GM12878 (cell line): ENCODE measurements at regions of chr11 and their contacts with region 1.

Region 1: GRCh38 chr11:119356349-119357031 is 10.0 kb upstream of the MFRP start:
- DNase-seq: no peak
- ATAC-seq: peak; percentile 91
- H3K4me3 ChIP-seq: peak overlapping the region; percentile 49; the same call in 1 of the 2 replicates
- H3K27ac ChIP-seq: no peak overlapping the region
- H3K4me1 ChIP-seq: peaks cover 10% of the 10 kb centered on the region
- H3K27me3 ChIP-seq: peaks cover 2 to 4% of the 10 kb centered on the region in 2 experiments; a peak in 3 of 4 replicates
- CTCF ChIP-seq: peak; percentile 78 to 94 (median 90)
- EP300 ChIP-seq: no peak
- POLR2A ChIP-seq: no peak
- RAD21 ChIP-seq: peak; percentile 72

Region 2: GRCh38 chr11:119368121-119369034 is 11.9 kb after region 1 on chr11:
- CTCF ChIA-PET with region 1: interaction called, 183 read pairs
- POLR2A ChIA-PET with region 1: interaction called, 6 read pairs
- RAD21 ChIA-PET with region 1: interaction called, 47 read pairs
- SMC1A ChIA-PET with region 1: interaction called, 31 read pairs
- in situ Hi-C with region 1: no loop called
- intact Hi-C with region 1: no loop called
- DNase-seq: no peak
- ATAC-seq: no peak
- H3K4me3 ChIP-seq: no peak overlapping the region
- H3K27ac ChIP-seq: no peak overlapping the region
- H3K4me1 ChIP-seq: no peaks in the 10 kb centered on the region
- H3K27me3 ChIP-seq: peaks cover 4 to 7% of the 10 kb centered on the region in 2 experiments; a peak in 3 of 4 replicates
- CTCF ChIP-seq: no peak
- EP300 ChIP-seq: no peak
- POLR2A ChIP-seq: no peak
- RAD21 ChIP-seq: no peak

Region 3: DNA sequence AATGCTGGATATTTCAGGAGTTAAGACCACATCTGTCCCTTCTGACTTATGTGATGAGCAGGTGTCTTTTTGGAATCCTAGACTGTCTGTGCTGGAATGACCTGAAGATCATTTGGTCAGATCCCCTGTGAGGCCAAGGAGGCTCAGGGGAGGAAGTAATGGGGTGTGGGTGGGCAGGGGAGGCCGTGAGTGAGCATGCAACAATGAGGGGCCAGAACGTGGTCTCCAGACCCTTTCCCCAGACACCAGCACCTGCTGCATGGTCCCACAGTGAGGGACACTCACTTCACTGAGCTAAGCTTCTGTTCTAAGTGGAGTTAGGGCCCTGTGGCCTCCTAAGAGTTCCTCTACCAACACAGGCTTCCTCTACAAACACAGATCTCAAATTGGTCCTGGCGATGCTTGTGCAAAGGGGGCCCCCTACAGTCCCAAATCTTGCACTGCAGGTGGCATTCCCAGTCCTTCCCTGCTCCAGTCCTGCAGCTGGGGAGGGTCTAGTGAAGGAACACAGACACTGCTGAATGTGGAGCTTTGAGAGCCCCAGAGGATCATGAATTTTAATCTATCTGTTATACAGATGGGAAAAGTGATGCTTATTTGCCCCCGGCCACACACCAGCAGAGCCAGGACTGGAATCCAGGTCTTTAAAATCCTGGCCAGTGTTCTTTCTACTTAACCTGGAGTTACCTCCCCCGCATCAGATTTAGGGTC is 17.6 kb after region 1 on chr11:
- CTCF ChIA-PET with region 1: interaction called, 183 read pairs
- POLR2A ChIA-PET with region 1: interaction called, 6 read pairs
- RAD21 ChIA-PET with region 1: interaction called, 47 read pairs
- SMC1A ChIA-PET with region 1: interaction called, 31 read pairs
- in situ Hi-C with region 1: no loop called
- intact Hi-C with region 1: no loop called
- DNase-seq: no peak
- ATAC-seq: peak; percentile 51
- H3K4me3 ChIP-seq: no peak overlapping the region
- H3K27ac ChIP-seq: no peak overlapping the region
- H3K4me1 ChIP-seq: no peaks in the 10 kb centered on the region
- H3K27me3 ChIP-seq: peaks cover 0 to 3% of the 10 kb centered on the region in 2 experiments; a peak in 2 of 4 replicates
- CTCF ChIP-seq: peak; percentile 71 to 78 (median 76); a peak in 5 of 6 replicates
- EP300 ChIP-seq: no peak
- POLR2A ChIP-seq: no peak
- RAD21 ChIP-seq: peak; percentile 81

Region 4: DNA sequence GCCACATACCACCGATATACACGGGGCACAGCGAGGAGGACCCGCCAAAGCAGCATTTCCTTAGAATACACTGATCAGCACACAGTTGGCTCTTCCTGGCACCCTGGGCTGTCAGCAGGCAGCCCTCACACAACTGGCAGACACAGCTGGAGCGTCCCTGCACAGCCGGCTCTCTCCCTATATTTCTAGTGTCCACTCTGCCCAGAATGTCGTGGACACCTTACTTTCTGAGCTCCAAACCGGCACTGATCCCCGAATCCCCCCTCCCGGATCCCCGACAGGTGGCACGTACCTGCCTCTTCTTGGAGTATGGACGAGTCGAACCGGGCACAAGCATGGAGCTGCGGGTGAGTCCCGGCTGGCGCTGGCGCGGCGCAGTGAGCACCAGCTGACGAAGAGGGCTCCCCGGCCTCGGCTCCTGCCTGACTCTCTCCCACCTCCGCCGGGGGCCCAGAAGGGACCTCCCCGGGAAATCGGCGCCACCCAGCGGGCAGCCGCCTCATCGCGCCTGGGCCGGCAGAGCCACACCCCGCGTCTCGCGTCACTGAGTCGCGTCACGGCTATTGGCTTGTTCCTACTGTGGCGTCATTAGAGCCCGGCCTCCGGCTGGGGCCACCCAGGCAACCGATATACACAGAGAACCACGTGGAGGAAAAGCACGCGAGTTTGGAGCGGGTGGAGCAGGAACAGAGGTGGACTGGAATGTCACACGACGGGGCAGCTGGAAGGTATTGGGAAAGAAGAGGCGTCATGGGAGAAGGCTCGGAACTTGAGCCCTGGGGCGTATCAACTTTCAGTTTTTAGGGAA is 24.9 kb after region 1 on chr11 and contains the start of gene USP2:
- CTCF ChIA-PET with region 1: interaction called, 183 read pairs
- POLR2A ChIA-PET with region 1: interaction called, 5 read pairs
- RAD21 ChIA-PET with region 1: interaction called, 47 read pairs
- SMC1A ChIA-PET with region 1: interaction called, 7 read pairs
- in situ Hi-C with region 1: no loop called
- intact Hi-C with region 1: no loop called
- DNase-seq: peak; percentile 48
- ATAC-seq: peak; percentile 99
- H3K4me3 ChIP-seq: peak within 1 kb of the TSS; percentile 40; the same call in 1 of the 2 replicates
- H3K27ac ChIP-seq: no peak within 1 kb of the TSS
- H3K4me1 ChIP-seq: 0 out of 2 replicates have a peak, but pooled peaks cover 3% of the 10 kb centered on the region
- H3K27me3 ChIP-seq: peaks cover 0 to 8% of the 10 kb centered on the region in 2 experiments; a peak in 3 of 4 replicates
- CTCF ChIP-seq: peak; percentile 83 to 88 (median 87)
- EP300 ChIP-seq: no peak
- POLR2A ChIP-seq: no peak
- RAD21 ChIP-seq: peak; percentile 28; the same call in 1 of the 2 replicates
- polyA plus RNA-seq, gene USP2: 0.04 TPM in 1 of 2 experiments, not detected in the other

Region 5: DNA sequence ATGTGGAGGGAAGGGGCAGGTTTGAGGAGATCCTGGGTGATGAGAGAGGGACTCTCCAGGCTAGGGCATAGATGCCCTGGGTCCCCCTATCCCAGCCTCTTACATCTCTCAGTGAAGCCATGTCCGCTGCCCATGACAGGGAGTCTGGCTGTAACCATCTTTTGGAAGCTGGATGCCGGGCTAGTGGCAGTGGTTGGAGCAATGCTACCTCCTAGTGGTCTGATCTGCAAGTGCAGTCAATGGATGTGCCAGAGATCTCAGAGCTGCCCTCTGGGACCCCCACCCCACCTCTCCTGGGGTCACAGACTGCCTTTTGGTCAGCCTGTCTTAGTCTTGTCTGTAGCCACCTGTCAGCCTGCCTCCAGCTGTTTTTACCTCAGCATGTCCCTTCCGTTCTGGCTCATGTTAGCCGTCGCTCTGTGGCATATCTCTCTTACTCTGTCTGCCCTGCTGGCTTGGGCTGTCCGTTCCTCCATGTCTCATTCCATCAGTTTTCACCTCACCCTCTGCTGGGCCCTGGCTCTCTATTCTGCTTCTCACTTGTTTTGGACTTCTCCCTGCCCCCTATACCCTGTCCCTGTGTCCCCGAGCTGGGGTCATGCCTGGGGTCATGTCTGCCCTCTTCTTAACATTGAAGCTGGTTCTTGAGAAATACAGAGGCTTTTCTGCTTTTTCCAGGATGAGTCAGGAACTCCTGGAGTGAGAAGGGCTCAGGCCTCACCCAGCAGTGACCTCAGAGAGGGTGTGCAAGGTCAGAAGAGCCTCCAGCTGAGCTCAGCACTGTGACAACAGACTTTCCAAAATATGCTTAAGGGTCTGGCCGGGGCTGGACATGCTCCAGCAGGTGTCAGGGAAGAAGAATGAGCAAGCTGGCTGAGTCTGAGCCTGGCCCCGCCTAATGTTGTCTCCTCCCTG is 118.4 kb after region 1 on chr11:
- CTCF ChIA-PET with region 1: interaction called, 83 read pairs
- POLR2A ChIA-PET with region 1: no interaction called
- RAD21 ChIA-PET with region 1: interaction called, 49 read pairs
- SMC1A ChIA-PET with region 1: interaction called, 32 read pairs
- in situ Hi-C with region 1: loop called (anchors 5 kb)
- intact Hi-C with region 1: loop called (anchors 1 kb)
- DNase-seq: no peak
- ATAC-seq: peak; percentile 87
- H3K4me3 ChIP-seq: no peak overlapping the region
- H3K27ac ChIP-seq: no peak overlapping the region
- H3K4me1 ChIP-seq: no peaks in the 10 kb centered on the region
- H3K27me3 ChIP-seq: peaks cover 0 to 1% of the 10 kb centered on the region in 2 experiments; a peak in 1 of 4 replicates
- CTCF ChIP-seq: peak; percentile 92 to 95 (median 93); a peak in 5 of 6 replicates
- EP300 ChIP-seq: no peak
- POLR2A ChIP-seq: no peak
- RAD21 ChIP-seq: peak; percentile 81

Region 6: DNA sequence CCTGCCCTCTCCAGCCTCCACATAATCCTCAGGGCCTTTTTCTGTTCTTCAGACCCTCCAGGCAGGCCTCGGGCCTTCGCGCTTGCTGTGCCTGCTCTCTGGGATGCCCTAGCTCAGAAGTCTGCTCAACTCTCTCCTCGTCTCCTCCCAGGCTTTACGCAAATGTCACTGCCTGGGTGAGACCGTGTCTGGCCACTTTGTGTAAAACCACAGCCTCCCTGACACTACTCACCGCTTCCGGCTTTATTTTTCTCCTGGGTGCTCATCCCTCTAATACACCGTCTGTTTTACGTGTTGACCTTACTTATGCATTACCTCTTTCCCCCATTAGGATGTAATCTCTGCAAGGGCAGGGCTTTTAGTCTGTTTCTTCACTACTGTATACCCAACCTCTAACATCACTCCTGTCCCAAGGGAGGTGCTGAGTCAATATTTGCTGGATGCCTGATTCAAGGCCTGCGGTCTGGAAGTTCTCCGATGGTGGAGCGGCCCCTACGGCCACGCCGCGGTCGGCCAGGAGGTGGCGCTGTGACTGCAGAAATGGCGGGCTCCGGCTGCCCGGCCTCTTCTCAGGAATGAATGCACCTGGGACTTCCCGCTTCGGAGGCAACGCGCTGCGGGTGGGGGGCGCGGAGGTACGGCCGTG is 124.7 kb after region 1 on chr11:
- CTCF ChIA-PET with region 1: interaction called, 28 read pairs
- POLR2A ChIA-PET with region 1: no interaction called
- RAD21 ChIA-PET with region 1: interaction called, 49 read pairs
- SMC1A ChIA-PET with region 1: interaction called, 32 read pairs
- in situ Hi-C with region 1: no loop called
- intact Hi-C with region 1: no loop called
- DNase-seq: peak; percentile 31
- ATAC-seq: peak; percentile 89
- H3K4me3 ChIP-seq: no peak overlapping the region
- H3K27ac ChIP-seq: no peak overlapping the region
- H3K4me1 ChIP-seq: no peaks in the 10 kb centered on the region
- H3K27me3 ChIP-seq: no peaks in the 10 kb centered on the region; a peak in 1 of 4 replicates
- CTCF ChIP-seq: peak; percentile 91 to 99 (median 97)
- EP300 ChIP-seq: no peak
- POLR2A ChIP-seq: no peak
- RAD21 ChIP-seq: peak; percentile 93

Region 7: GRCh38 chr11:119983240-119983732 is 626.8 kb after region 1 on chr11:
- CTCF ChIA-PET with region 1: no interaction called
- POLR2A ChIA-PET with region 1: interaction called, 12 read pairs
- RAD21 ChIA-PET with region 1: no interaction called
- SMC1A ChIA-PET with region 1: no interaction called
- in situ Hi-C with region 1: no loop called
- intact Hi-C with region 1: no loop called
- DNase-seq: no peak
- ATAC-seq: no peak
- H3K4me3 ChIP-seq: no peak overlapping the region
- H3K27ac ChIP-seq: no peak overlapping the region
- H3K4me1 ChIP-seq: no peaks in the 10 kb centered on the region
- H3K27me3 ChIP-seq: peaks cover 3 to 4% of the 10 kb centered on the region in 2 experiments; a peak in 3 of 4 replicates
- CTCF ChIP-seq: 0 out of 6 replicates have a peak, but pooled peaks of 1 of the 3 experiments have one; percentile 6
- EP300 ChIP-seq: no peak
- POLR2A ChIP-seq: no peak
- RAD21 ChIP-seq: no peak

Region 8: GRCh38 chr11:120121871-120122473 is 765.5 kb after region 1 on chr11:
- CTCF ChIA-PET with region 1: no interaction called
- POLR2A ChIA-PET with region 1: no interaction called
- RAD21 ChIA-PET with region 1: no interaction called
- SMC1A ChIA-PET with region 1: no interaction called
- in situ Hi-C with region 1: no loop called
- intact Hi-C with region 1: no loop called
- DNase-seq: no peak
- ATAC-seq: no peak; the same call in 2 of the 3 replicates
- H3K4me3 ChIP-seq: no peak overlapping the region
- H3K27ac ChIP-seq: no peak overlapping the region
- H3K4me1 ChIP-seq: no peaks in the 10 kb centered on the region
- H3K27me3 ChIP-seq: no peaks in the 10 kb centered on the region; a peak in 1 of 4 replicates
- CTCF ChIP-seq: no peak
- EP300 ChIP-seq: no peak
- POLR2A ChIP-seq: no peak
- RAD21 ChIP-seq: no peak